Endothelial cell of umbilical vein (primary cell): ENCODE measurements at regions of chr12 and their contacts with region 1.

Region 1: GRCh38 chr12:24960222-24960855 is 11.4 kb upstream of the BCAT1 start:
- DNase-seq: peak; percentile 66
- H3K4me3 ChIP-seq: no peak overlapping the region
- H3K27ac ChIP-seq: no peak overlapping the region
- H3K4me1 ChIP-seq: no peaks in the 10 kb centered on the region
- H3K27me3 ChIP-seq: peaks cover 0 to 2% of the 10 kb centered on the region in 2 experiments
- CTCF ChIP-seq: peak; percentile 73 to 79
- POLR2A ChIP-seq: no peak

Region 2: DNA sequence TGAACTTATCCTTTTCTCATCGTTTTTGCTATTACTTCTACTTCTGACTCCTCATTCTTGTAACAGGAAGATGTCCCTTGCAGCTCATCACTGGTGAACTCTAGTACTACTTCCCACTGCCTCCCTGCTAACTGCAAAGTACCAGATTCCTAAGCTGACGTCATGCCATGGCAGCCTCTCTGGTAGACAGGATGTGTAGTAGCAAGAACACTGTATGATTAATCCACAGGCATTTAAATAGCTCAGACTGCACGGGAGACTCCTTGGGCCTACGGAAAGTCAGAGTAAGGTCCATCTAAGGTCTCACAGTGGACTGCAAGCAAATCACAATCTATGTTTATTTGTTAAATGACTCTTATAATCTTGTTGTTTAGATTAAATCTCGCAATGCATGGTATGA is 191.1 kb after region 1 on chr12:
- CTCF ChIA-PET with region 1: interaction called, 9 read pairs
- POLR2A ChIA-PET with region 1: no interaction called
- dilution Hi-C with region 1: no loop called
- intact Hi-C with region 1: loop called (anchors 1 kb)
- DNase-seq: peak; percentile 84
- H3K4me3 ChIP-seq: no peak overlapping the region
- H3K27ac ChIP-seq: peak overlapping the region; percentile 45
- H3K4me1 ChIP-seq: peaks cover 6% of the 10 kb centered on the region
- H3K27me3 ChIP-seq: no peaks in the 10 kb centered on the region
- CTCF ChIP-seq: no peak
- POLR2A ChIP-seq: no peak